Mammary epithelial cell (primary cell): ENCODE measurements at regions of chr19 and their contacts with region 1.

Region 1: DNA sequence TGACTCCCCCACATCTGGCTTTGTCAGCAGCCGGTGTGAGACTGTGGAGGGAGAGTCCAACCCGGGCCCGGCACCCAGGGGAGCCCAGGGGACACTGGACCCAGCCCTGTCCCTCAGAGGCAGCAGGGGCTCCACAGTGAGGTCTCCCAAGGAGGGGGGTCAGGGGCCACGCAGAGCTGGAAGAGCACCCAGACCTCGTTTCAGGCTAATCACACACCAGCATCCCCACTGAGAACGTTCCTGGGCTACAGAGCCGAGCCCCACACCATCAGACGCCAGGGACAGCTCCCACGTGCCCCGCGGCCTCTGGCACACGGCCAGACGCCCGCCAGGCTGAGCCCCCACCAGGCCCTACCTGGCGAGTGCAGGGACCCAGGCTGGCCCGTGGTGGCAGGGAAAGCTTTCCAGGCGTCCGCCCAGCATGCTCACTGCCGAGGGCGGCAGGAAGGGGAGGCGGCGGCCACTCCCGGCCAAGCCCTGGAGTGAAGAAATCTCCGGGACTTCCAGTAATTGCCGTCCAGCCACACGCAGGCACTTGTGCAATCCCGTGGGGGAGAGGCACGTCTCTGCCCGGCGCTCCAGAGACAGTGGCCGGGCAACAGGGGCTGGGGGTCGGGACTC is 19.2 kb downstream of the SBNO2 start:
- DNase-seq: peak; percentile 85
- H3K4me3 ChIP-seq: peak overlapping the region; percentile 32 to 46 (median 45)
- H3K27ac ChIP-seq: peak overlapping the region; percentile 77
- H3K4me1 ChIP-seq: peaks cover 35% of the 10 kb centered on the region
- H3K27me3 ChIP-seq: no peaks in the 10 kb centered on the region
- CTCF ChIP-seq: no peak

Region 2: GRCh38 chr19:1074544-1075283 is 80.1 kb before region 1 on chr19:
- CTCF ChIA-PET with region 1: no interaction called
- dilution Hi-C with region 1: loop called (anchors 5 kb)
- in situ Hi-C with region 1: no loop called
- intact Hi-C with region 1: no loop called
- DNase-seq: peak; percentile 51
- H3K4me3 ChIP-seq: peak overlapping the region in 2 of 3 experiments; percentile 34 to 43
- H3K27ac ChIP-seq: no peak overlapping the region
- H3K4me1 ChIP-seq: peaks cover 13% of the 10 kb centered on the region
- H3K27me3 ChIP-seq: peaks cover 6% of the 10 kb centered on the region
- CTCF ChIP-seq: no peak

Region 3: GRCh38 chr19:1122972-1123363 is 31.9 kb before region 1 on chr19:
- CTCF ChIA-PET with region 1: no interaction called
- dilution Hi-C with region 1: loop called (anchors 5 kb)
- in situ Hi-C with region 1: no loop called
- intact Hi-C with region 1: no loop called
- DNase-seq: peak; percentile 69
- H3K4me3 ChIP-seq: no peak overlapping the region
- H3K27ac ChIP-seq: no peak overlapping the region
- H3K4me1 ChIP-seq: peaks cover 14% of the 10 kb centered on the region
- H3K27me3 ChIP-seq: no peaks in the 10 kb centered on the region
- CTCF ChIP-seq: no peak

Region 4: GRCh38 chr19:1131738-1132551 is 22.9 kb before region 1 on chr19:
- CTCF ChIA-PET with region 1: no interaction called
- dilution Hi-C with region 1: no loop called
- in situ Hi-C with region 1: no loop called
- intact Hi-C with region 1: loop called (anchors 1 kb)
- DNase-seq: peak; percentile 83
- H3K4me3 ChIP-seq: peak overlapping the region; percentile 58 to 74 (median 58)
- H3K27ac ChIP-seq: peak overlapping the region; percentile 70
- H3K4me1 ChIP-seq: peaks cover 45% of the 10 kb centered on the region
- H3K27me3 ChIP-seq: no peaks in the 10 kb centered on the region
- CTCF ChIP-seq: no peak

Region 5: GRCh38 chr19:1173845-1174809 is 19.3 kb after region 1 on chr19 and contains the start of gene SBNO2:
- CTCF ChIA-PET with region 1: no interaction called
- dilution Hi-C with region 1: no loop called
- in situ Hi-C with region 1: no loop called
- intact Hi-C with region 1: loop called (anchors 2 kb)
- DNase-seq: peak; percentile 81
- H3K4me3 ChIP-seq: peak within 1 kb of the TSS; percentile 79 to 82 (median 79)
- H3K27ac ChIP-seq: peak within 1 kb of the TSS; percentile 71
- H3K4me1 ChIP-seq: peaks cover 53% of the 10 kb centered on the region
- H3K27me3 ChIP-seq: no peaks in the 10 kb centered on the region
- CTCF ChIP-seq: no peak
- total RNA-seq, gene SBNO2: 37.0 to 108 TPM

Region 6: DNA sequence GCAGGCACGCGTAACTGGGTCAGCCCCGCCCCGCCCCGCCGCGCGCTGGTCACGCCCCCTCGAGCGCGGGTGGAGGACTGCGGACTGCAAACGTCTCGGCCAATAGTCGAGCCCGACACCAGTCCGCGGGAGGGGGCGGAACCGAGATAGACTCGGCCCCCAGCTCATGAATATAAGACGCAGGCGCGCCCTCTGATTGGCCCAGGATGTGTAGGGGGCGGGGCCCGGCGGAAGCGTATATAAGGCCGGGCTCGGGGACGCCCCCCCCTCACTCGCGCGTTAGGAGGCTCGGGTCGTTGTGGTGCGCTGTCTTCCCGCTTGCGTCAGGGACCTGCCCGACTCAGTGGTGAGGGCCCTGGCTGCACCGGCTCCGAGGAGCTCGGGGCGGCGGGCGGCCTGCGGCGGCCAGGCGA is 114.2 kb after region 1 on chr19 and contains the start of gene CIRBP:
- CTCF ChIA-PET with region 1: no interaction called
- dilution Hi-C with region 1: loop called (anchors 10 kb)
- in situ Hi-C with region 1: no loop called
- intact Hi-C with region 1: no loop called
- DNase-seq: peak; percentile 98
- H3K4me3 ChIP-seq: peak within 1 kb of the TSS; percentile 55 to 72 (median 61)
- H3K27ac ChIP-seq: peak within 1 kb of the TSS; percentile 77
- H3K4me1 ChIP-seq: peaks cover 54% of the 10 kb centered on the region
- H3K27me3 ChIP-seq: no peaks in the 10 kb centered on the region
- CTCF ChIP-seq: no peak
- total RNA-seq, gene CIRBP: 196 to 221 TPM

Region 7: DNA sequence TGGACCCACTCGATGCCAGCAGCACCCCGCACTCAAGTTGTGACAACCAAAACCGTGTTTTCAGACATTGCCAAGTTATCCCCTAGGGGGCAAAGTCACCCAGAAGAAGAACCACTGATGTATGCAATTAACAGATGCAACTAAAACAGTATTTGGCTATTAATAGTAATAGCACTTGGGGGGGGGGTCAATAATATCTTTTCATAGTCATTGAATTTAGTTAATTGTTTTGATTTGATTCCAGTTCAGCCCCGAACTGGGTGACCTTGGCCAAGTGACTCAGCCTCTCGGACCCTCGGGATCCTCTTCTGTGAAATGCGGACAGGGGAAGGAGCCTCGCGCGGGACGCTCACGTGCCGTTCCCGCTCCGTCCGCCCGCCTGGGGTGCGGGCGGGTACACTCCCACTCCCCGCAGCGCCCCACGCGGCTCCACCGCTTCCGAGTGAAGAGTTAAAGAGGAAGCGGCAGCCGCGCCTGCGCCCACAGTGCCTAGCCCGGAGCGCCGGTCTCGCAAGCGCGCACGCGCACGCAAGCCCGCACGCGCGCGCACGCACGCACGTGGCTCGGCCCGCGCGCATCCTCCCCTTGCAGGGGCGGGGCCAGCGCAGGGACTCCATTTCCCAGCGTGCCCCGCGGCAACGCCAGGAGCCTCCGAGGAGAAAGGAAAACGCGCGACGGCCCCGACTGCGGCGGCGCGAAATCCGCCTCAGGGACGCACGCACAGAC is 252.1 kb after region 1 on chr19:
- CTCF ChIA-PET with region 1: no interaction called
- dilution Hi-C with region 1: loop called (anchors 10 kb)
- in situ Hi-C with region 1: no loop called
- intact Hi-C with region 1: no loop called
- DNase-seq: peak; percentile 98
- H3K4me3 ChIP-seq: peak overlapping the region; percentile 56 to 71 (median 65)
- H3K27ac ChIP-seq: peak overlapping the region; percentile 25
- H3K4me1 ChIP-seq: peaks cover 50% of the 10 kb centered on the region
- H3K27me3 ChIP-seq: no peaks in the 10 kb centered on the region
- CTCF ChIP-seq: peak; percentile 37 to 63